Activated naive CD4-positive, alpha-beta T cell treated with anti-CD3 and anti-CD28 coated beads, Interleukin-2, amount 10 ng/mL, durations not matched to agents 7 days and 5 days (primary cell): ENCODE measurements at regions of chr11 and their contacts with region 1.

Region 1: DNA sequence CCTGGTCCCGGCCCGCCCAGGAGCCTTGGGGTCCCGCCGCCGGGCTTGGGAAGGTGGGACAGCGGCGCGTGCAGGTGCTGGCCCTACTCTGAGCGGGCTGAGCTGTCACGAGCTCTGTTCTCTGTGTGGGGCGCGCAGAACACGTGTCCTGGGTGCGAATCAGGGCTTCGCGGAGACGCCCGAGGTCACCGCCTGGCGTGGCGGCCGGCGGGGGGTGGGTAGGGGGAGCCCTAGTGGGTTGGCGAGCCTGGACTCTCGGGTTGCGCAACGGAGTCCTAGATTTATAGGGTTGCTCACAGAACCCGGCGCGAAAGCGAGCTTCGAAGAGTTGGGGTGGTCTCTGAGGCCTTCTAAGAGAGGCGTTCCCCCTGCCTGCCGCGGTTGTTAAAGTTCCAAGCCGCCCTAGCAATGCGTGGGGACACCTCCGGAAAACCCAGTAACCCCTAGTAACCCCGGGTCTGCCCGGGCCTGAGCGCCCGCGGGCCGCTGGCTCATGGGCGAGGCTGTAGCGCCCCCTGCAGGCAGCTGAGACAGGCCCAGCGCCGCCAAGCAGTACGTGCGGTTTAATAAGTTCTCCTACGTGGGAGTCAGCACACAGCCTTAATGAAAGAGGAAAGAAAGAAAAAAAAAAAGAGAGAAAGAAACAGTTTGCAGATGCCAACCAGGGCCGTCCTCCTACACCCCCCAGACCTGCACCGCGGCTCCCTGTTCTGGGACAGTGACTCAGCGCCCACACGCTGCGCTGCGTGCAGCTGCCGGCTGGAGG is 2.8 kb downstream of the ADM start:
- DNase-seq: peak; percentile 81
- H3K4me3 Mint-ChIP-seq: peak overlapping the region; percentile 52
- H3K27ac Mint-ChIP-seq: peak overlapping the region; percentile 83
- H3K4me1 Mint-ChIP-seq: peaks cover 58% of the 10 kb centered on the region
- H3K27me3 Mint-ChIP-seq: peaks cover 88% of the 10 kb centered on the region

Region 2: GRCh38 chr11:9757809-9758636 is 549.6 kb before region 1 on chr11:
- CTCF ChIA-PET with region 1: interaction called, 31 read pairs
- DNase-seq: peak; percentile 94
- H3K4me3 Mint-ChIP-seq: peak overlapping the region; percentile 72
- H3K27ac Mint-ChIP-seq: peak overlapping the region; percentile 79
- H3K4me1 Mint-ChIP-seq: peaks cover 38% of the 10 kb centered on the region
- H3K27me3 Mint-ChIP-seq: no peaks in the 10 kb centered on the region

Region 3: GRCh38 chr11:10181811-10182210 is 125.8 kb before region 1 on chr11:
- CTCF ChIA-PET with region 1: interaction called, 11 read pairs
- DNase-seq: no peak
- H3K4me3 Mint-ChIP-seq: no peak overlapping the region
- H3K27ac Mint-ChIP-seq: no peak overlapping the region
- H3K4me1 Mint-ChIP-seq: no peaks in the 10 kb centered on the region
- H3K27me3 Mint-ChIP-seq: no peaks in the 10 kb centered on the region

Region 4: DNA sequence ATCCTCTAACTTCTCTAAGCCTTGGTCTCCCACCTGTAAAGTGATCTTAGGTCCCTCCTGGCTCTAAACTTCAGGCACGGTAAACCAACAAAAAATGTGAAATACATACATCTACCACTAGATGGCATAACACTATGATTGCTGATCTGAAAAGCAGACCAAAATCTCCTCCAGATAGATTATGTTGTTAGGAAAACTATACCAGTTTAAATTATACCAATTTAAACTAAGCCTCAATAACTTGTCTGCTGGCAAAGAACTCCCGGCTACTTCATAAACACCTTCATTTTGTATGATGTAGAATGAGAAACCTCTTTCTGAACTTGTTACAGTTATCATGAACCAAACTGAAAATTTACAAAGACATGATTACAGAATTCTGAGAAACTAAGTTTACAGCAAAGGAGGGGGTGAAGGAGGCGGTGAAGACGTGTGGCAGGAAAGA is 99.5 kb before region 1 on chr11:
- CTCF ChIA-PET with region 1: interaction called, 47 read pairs
- DNase-seq: no peak
- H3K4me3 Mint-ChIP-seq: no peak overlapping the region
- H3K27ac Mint-ChIP-seq: no peak overlapping the region
- H3K4me1 Mint-ChIP-seq: no peaks in the 10 kb centered on the region
- H3K27me3 Mint-ChIP-seq: peaks cover 8% of the 10 kb centered on the region

Region 5: GRCh38 chr11:10322830-10323792 is 15.5 kb after region 1 on chr11:
- CTCF ChIA-PET with region 1: interaction called, 12 read pairs
- DNase-seq: peak; percentile 56
- H3K4me3 Mint-ChIP-seq: no peak overlapping the region
- H3K27ac Mint-ChIP-seq: no peak overlapping the region
- H3K4me1 Mint-ChIP-seq: peaks cover 4% of the 10 kb centered on the region
- H3K27me3 Mint-ChIP-seq: peaks cover 22% of the 10 kb centered on the region

Region 6: GRCh38 chr11:10333490-10333889 is 25.9 kb after region 1 on chr11:
- CTCF ChIA-PET with region 1: no interaction called
- DNase-seq: no peak
- H3K4me3 Mint-ChIP-seq: no peak overlapping the region
- H3K27ac Mint-ChIP-seq: no peak overlapping the region
- H3K4me1 Mint-ChIP-seq: no peaks in the 10 kb centered on the region
- H3K27me3 Mint-ChIP-seq: peaks cover 5% of the 10 kb centered on the region

Region 7: GRCh38 chr11:10366568-10367370 is 59.1 kb after region 1 on chr11:
- CTCF ChIA-PET with region 1: interaction called, 10 read pairs
- DNase-seq: peak; percentile 72
- H3K4me3 Mint-ChIP-seq: no peak overlapping the region
- H3K27ac Mint-ChIP-seq: no peak overlapping the region
- H3K4me1 Mint-ChIP-seq: peaks cover 6% of the 10 kb centered on the region
- H3K27me3 Mint-ChIP-seq: peaks cover 11% of the 10 kb centered on the region